ENCODE measurements at regions of chr12 and their contacts with region 1.

Region 1: DNA sequence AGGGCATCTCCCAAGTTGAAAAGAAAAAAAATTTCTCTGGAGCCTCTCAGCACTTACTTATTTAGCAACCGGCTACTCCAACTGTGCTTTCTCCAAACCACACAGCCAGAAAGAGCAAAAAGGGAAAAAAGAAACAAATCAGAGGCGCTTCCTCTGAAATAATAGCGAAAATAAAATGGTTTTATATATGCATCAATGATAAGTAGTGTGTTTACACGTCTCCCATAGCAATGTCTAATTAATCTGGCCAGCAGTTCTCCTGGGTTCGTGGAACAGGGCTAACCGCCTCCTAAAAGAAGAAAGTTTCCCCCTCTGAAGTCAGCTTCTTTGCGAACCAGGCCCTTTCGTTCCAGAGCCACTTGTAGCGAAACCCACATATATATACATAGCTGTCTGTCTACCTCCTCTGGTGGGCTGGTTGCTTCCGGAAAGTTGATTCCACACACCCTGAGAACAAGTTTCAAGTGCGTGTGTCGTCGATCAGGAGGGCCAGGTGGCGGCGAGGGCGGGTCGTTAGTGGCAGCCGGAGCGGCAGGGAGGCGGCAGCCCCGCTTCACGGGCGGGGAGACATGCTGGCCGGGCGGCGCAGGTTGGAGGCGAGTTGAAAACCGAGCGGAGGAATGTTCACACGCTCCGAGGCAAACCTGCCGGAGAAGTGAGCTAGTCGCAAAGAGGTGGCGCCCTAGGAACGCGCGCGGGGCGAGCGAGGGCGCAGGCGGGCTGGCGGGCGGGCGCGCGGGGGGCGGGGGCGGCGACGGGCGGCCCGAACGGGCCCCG is 2.7 kb downstream of the PTHLH start:
- DNase-seq: peak; percentile 37 to 38
- ATAC-seq: peak; percentile 34 to 68 (median 58)
- H3K4me3 ChIP-seq: peak overlapping the region; percentile 33 to 62 (median 56)
- H3K27ac ChIP-seq: peak overlapping the region in 5 of 10 donors; percentile 41 to 66 (median 48)
- H3K4me1 ChIP-seq: peaks cover 0 to 36% (median 19%) of the 10 kb centered on the region in 9 donors
- H3K27me3 ChIP-seq: peaks cover 0 to 98% (median 85%) of the 10 kb centered on the region in 7 donors
- CTCF ChIP-seq: peak in 3 of 9 donors; percentile 30 to 31 (median 30)

Region 2: DNA sequence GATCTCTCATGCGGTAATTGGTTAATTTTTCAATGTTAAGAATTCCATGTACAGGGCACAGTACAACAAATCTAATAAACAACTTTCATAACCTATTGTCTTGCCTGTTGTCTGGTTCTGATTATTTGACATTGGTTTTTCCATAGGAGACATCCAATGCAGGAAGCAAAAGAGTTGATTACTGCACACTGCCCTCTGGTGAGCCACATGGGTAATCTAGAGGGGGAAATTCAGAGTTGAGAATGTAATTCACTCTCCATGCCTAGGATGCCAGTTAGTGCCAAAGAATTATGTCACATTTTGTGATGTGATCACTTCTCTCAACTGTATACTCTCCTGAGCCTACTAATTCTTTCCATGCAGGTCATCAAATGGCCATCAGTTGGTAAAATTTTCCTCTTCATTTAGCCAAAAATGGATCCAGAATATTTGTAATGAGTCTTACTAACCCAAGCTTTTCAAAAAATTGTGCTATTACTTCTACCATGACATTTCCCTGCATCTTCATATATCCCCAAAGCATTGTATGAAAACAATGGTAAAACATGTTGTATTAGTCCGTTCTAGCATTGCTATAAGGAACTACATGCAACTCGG is 202.7 kb after region 1 on chr12:
- intact Hi-C with region 1: loop called in 2 of 10 experiments (anchors 10 kb)
- DNase-seq: no peak
- ATAC-seq: no peak
- H3K4me3 ChIP-seq: no peak overlapping the region
- H3K27ac ChIP-seq: no peak overlapping the region
- H3K4me1 ChIP-seq: no peaks in the 10 kb centered on the region
- H3K27me3 ChIP-seq: no peaks in the 10 kb centered on the region
- CTCF ChIP-seq: peak in 8 of 9 donors; percentile 13 to 59 (median 46)

Region 3: DNA sequence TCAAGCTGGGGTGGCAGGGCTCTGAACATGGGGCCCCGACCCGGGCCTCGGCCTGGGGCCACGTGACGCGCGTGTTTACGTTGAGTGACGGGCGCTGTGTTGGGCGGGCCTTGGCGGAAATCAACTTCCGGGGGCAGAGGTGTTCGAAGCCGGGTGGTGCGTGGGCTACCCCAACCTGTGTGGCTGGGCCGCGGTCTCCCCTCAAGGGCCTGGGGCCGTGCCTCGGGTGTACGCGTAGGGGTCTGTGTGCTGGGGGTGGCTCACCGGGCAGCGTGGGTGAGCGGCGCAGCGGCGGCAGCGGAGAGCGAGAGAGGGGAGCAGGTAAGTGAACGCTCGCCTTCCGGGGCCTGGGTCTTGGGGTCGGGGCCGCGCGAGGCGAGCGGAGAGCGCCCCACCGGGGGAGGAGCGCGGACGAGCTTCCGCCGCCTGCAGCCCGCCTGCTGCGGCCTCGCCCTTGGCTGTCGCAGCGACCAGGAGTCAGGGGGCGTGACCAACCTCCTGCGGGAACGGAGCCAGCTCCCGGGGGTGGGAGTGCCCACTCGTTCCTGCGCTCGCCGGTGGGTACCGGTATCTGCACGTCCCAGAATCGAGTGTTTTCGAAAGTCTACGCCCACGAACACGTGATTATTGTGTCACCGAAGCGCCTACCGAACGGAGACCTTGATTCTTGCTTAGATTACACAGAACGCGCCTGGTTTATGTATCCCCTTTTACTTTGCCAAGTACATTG is 220.7 kb after region 1 on chr12 and contains the start of gene CCDC91:
- intact Hi-C with region 1: loop called in 1 of 10 experiments (anchors 10 kb)
- DNase-seq: peak; percentile 86 to 87
- ATAC-seq: peak; percentile 91 to 98 (median 92)
- H3K4me3 ChIP-seq: peak within 1 kb of the TSS; percentile 70 to 97 (median 78)
- H3K27ac ChIP-seq: peak within 1 kb of the TSS; percentile 91 to 99 (median 96)
- H3K4me1 ChIP-seq: peaks cover 0 to 22% (median 14%) of the 10 kb centered on the region in 9 donors
- H3K27me3 ChIP-seq: no peaks in the 10 kb centered on the region
- CTCF ChIP-seq: peak in 1 of 9 donors; percentile 28
- total RNA-seq, gene CCDC91: 44.7 to 66.4 (median 56.7) TPM

Region 4: GRCh38 chr12:29008786-29009185 is 1039.0 kb after region 1 on chr12:
- intact Hi-C with region 1: loop called in 1 of 10 experiments (anchors 10 kb)
- DNase-seq: no peak
- ATAC-seq: no peak
- H3K4me3 ChIP-seq: no peak overlapping the region
- H3K27ac ChIP-seq: no peak overlapping the region
- H3K4me1 ChIP-seq: no peaks in the 10 kb centered on the region
- H3K27me3 ChIP-seq: no peaks in the 10 kb centered on the region
- CTCF ChIP-seq: no peak